ENCODE measurements at regions of chr15 and their contacts with region 1.

Region 1: DNA sequence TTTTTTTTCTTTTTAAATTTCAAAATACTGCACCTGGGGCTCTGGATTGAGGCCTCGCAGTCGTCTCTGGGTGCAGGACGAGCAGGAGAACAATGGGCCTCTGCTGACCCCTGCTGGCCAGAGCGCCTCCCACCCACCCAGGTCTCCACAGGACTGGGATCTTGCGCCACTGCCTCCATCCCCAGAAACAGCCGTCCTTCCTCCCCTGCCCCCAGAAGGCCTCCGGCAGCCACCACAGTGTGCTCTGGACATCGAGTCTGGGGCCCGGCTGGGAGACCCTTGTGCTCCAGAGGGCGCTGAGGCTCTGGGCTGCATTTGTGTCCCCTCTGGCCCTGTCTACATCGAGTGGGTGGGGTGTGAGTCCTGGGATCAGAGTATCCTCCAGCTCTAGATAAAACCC is 6.6 kb upstream of the ACSBG1 start:
- DNase-seq: peak; percentile 79 to 96 (median 90)
- ATAC-seq: peak; percentile 94 to 98 (median 98)
- H3K4me3 ChIP-seq: no peak overlapping the region
- H3K27ac ChIP-seq: no peak overlapping the region
- H3K4me1 ChIP-seq: no peaks in the 10 kb centered on the region
- H3K27me3 ChIP-seq: no peaks in the 10 kb centered on the region
- CTCF ChIP-seq: peak; percentile 73 to 90 (median 83)

Region 2: DNA sequence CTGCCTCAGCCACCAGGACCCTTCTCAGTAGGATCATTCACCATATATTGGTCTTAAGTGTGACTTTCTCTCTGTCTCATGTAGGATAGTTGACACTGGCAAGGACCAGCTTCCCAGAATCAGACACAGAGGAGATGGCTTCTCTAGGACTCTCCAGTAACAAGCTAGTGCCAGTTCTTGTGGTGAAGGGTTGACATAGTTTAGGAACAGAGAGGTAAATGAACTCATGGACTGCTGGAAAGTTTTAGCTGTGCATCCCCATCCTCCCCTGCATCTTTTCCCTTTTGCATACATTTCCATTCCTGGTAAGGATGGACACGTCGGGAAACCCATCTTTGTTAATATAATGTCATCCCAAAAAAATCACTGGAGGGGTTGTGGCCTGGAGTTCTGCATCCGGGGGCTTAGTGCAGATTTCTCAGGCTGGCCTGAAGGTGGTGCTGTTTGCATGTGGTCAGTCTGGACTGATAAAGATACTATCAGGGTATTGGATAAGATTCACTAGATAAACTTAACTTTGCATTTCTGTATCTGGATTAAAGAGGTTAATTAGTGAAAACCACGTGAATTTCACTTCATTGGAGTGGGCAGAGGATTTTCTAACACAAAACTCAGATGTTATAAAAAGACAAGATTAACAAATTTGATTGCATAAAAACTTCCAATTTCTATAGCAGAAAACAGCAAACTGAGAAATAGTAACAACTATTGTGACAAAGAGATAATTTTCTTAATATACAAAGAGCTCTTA is 274.3 kb before region 1 on chr15:
- intact Hi-C with region 1: loop called in 1 of 3 experiments (anchors 10 kb)
- DNase-seq: no peak
- ATAC-seq: peak; percentile 72 to 93 (median 91)
- H3K4me3 ChIP-seq: no peak overlapping the region
- H3K27ac ChIP-seq: no peak overlapping the region
- H3K4me1 ChIP-seq: no peaks in the 10 kb centered on the region
- H3K27me3 ChIP-seq: no peaks in the 10 kb centered on the region
- CTCF ChIP-seq: peak; percentile 25 to 66 (median 62)

Region 3: DNA sequence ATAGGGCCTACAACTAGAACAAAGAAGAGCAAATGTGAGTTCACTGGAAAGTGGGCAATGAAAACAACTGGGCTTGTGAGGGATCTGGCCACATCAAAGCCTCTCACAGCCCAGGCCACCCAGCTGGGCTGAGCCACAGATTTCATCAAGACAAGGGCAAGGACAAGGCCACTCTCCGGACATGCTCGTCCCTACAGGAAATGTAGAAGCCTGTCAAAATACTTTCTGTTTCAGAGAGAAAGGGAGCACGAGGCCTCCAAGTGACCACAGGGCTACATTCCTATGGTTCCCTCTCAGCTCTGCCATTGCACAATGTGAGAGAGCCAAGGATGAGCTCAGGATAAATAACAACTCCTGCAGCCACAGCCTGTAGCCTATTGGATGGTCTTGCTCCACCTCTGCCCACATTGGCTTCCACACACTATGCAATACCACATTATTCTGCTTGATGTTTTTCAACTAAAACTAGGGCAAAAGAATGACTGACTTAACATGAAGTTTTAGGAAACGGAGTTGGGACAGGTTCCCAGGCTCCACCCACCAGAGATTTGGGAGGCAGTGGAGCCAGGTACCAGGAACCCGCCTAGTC is 175.6 kb before region 1 on chr15:
- intact Hi-C with region 1: no loop called
- DNase-seq: peak in 2 of 6 donors; percentile 38 to 63
- ATAC-seq: peak; percentile 41 to 75 (median 64)
- H3K4me3 ChIP-seq: no peak overlapping the region
- H3K27ac ChIP-seq: peak overlapping the region; percentile 17 to 76 (median 54)
- H3K4me1 ChIP-seq: peaks cover 45 to 75% (median 65%) of the 10 kb centered on the region in 3 donors
- H3K27me3 ChIP-seq: no peaks in the 10 kb centered on the region
- CTCF ChIP-seq: no peak

Region 4: GRCh38 chr15:78177447-78177873 is 63.5 kb before region 1 on chr15:
- intact Hi-C with region 1: loop called in 1 of 3 experiments (anchors 5 kb)
- DNase-seq: peak in 3 of 6 donors; percentile 36 to 75 (median 51)
- ATAC-seq: peak; percentile 50 to 86 (median 68)
- H3K4me3 ChIP-seq: no peak overlapping the region
- H3K27ac ChIP-seq: no peak overlapping the region
- H3K4me1 ChIP-seq: no peaks in the 10 kb centered on the region
- H3K27me3 ChIP-seq: no peaks in the 10 kb centered on the region
- CTCF ChIP-seq: peak; percentile 13 to 48 (median 28)